PC-9 (cell line): ENCODE measurements at regions of chr12 and their contacts with region 1.

Region 1: GRCh38 chr12:66860752-66861750 is 182.2 kb upstream of the GRIP1 start:
- DNase-seq: peak; percentile 44 to 59
- H3K4me3 ChIP-seq: no peak overlapping the region
- H3K27ac ChIP-seq: no peak overlapping the region
- H3K4me1 ChIP-seq: peaks cover 17% of the 10 kb centered on the region
- H3K27me3 ChIP-seq: no peaks in the 10 kb centered on the region
- CTCF ChIP-seq: peak; percentile 94

Region 2: DNA sequence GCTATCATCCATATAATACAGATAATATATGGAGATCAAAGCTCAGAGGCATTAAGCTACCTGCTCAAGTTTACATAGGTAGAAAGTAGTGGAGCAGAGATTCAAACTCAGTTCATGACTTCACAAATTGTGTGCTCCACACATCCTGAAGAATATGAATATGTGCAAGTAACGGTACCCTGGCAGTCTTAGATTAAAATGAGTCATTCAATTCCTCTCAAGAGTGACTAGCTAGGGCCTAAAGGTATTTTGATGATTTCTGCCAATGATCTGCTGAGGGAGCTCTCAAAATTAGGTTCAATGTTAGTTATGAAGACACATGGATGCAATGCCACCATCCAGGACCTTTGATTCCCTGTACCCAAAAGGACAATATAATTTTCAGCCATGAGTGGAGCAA is 241.0 kb before region 1 on chr12:
- CTCF ChIA-PET with region 1: no interaction called
- POLR2A ChIA-PET with region 1: no interaction called
- intact Hi-C with region 1: no loop called
- DNase-seq: no peak
- H3K4me3 ChIP-seq: no peak overlapping the region
- H3K27ac ChIP-seq: no peak overlapping the region
- H3K4me1 ChIP-seq: no peaks in the 10 kb centered on the region
- H3K27me3 ChIP-seq: no peaks in the 10 kb centered on the region
- CTCF ChIP-seq: no peak

Region 3: DNA sequence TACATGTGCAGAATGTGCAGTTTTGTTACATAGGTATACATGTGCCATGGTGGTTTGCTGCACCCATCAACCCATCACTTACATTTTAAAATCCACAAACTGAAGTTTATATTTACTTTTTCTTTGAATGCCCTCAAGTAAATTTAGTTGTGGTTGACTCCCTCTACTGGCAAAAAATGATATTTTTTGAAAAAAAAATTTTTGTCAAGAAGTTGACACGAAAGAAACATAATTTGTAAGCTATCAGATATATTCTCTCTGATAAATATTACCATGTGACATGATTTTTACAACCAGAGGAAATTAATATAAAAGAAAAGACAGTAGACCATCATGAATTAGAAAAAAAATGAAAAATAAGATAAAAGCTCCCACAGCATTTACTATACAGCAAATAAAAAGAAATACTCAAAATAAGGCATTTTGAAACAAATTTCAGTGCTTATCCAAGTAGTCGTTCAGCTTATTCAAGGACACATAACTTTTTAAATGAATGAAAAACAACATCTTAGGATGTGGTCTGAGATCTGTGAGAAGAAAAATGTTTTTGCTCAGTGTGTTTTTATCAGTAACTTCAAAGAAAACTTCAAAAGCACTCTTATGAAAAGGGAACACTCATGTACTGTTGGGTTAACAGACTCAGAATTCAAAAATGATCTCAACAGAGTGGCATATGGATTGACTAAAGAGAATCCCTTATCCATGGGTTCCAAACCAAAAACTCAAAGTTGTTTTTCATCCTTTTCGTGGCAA is 152.2 kb before region 1 on chr12:
- CTCF ChIA-PET with region 1: interaction called, 3 read pairs
- POLR2A ChIA-PET with region 1: no interaction called
- intact Hi-C with region 1: loop called (anchors 2 kb)
- DNase-seq: no peak
- H3K4me3 ChIP-seq: no peak overlapping the region
- H3K27ac ChIP-seq: no peak overlapping the region
- H3K4me1 ChIP-seq: no peaks in the 10 kb centered on the region
- H3K27me3 ChIP-seq: no peaks in the 10 kb centered on the region
- CTCF ChIP-seq: peak; percentile 73

Region 4: GRCh38 chr12:67222302-67222701 is 361.3 kb after region 1 on chr12:
- CTCF ChIA-PET with region 1: no interaction called
- POLR2A ChIA-PET with region 1: no interaction called
- intact Hi-C with region 1: loop called (anchors 5 kb)
- DNase-seq: peak in 1 of 2 experiments; percentile 4
- H3K4me3 ChIP-seq: no peak overlapping the region
- H3K27ac ChIP-seq: no peak overlapping the region
- H3K4me1 ChIP-seq: no peaks in the 10 kb centered on the region
- H3K27me3 ChIP-seq: no peaks in the 10 kb centered on the region
- CTCF ChIP-seq: peak; percentile 60; the same call in 1 of the 2 replicates